PC-3 (cell line): ENCODE measurements at regions of chr9 and their contacts with region 1.

Region 1: GRCh38 chr9:134443168-134444037 is 117.1 kb downstream of the RXRA start:
- DNase-seq: peak; percentile 90
- ATAC-seq: peak; percentile 99
- H3K4me3 ChIP-seq: no peak overlapping the region
- H3K27ac ChIP-seq: no peak overlapping the region
- H3K4me1 ChIP-seq: peaks cover 5% of the 10 kb centered on the region; the same call in 1 of the 2 replicates
- H3K27me3 ChIP-seq: no peaks in the 10 kb centered on the region
- CTCF ChIP-seq: peak; percentile 87

Region 2: GRCh38 chr9:134171316-134172197 is 271.8 kb before region 1 on chr9:
- CTCF ChIA-PET with region 1: interaction called, 12 read pairs
- POLR2A ChIA-PET with region 1: no interaction called
- intact Hi-C with region 1: loop called (anchors 1 kb)
- DNase-seq: no peak
- ATAC-seq: no peak
- H3K4me3 ChIP-seq: no peak overlapping the region
- H3K27ac ChIP-seq: no peak overlapping the region
- H3K4me1 ChIP-seq: no peaks in the 10 kb centered on the region; the same call in 1 of the 2 replicates
- H3K27me3 ChIP-seq: peaks cover 5% of the 10 kb centered on the region
- CTCF ChIP-seq: no peak

Region 3: DNA sequence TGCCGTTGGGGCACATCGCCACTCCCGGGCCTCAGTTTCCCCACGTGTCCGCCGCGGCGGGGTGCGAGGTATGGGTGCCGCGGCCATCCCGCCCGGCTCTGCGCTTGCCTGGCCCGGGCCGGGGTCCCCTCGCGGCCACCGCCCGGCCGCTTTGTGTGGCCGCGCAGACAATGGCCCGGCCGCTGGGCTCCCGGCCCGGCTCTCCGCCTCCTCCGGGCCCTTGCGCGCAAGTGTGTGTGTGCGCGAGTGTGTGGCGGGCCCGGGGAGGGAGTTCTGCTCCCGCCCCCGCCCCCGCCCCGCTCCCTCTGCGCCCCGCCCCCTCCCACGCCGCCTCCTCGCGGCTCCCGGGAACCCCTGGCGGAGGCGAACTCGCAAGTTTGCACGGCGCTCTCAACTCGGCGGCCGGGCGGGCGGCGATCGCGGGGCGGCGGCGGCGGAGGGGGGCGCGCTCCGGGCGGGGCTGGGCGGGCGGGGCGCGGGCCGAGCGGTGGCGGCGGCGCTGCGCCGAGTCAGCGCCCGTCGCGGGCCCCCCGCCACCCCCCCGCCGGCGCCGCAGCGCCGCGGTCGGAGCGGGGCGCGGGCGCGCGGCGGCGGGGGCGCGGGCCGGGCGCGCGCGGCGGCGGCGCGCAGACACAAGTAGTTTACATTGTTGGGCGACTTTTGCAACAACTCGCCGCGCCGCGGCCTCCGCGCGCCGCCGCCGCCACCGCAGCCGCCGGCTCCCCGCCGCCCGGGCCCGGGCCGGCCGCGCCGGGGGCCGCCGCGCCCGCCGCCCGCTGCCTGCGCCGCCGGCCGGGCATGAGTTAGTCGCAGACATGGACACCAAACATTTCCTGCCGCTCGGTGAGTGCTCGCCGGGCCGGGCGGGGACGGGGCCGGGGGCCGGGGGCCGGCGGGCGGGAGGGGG is 117.3 kb before region 1 on chr9 and contains the start of gene RXRA:
- CTCF ChIA-PET with region 1: interaction called, 3 read pairs
- POLR2A ChIA-PET with region 1: interaction called, 10 read pairs
- intact Hi-C with region 1: no loop called
- DNase-seq: peak; percentile 65
- ATAC-seq: peak; percentile 54
- H3K4me3 ChIP-seq: peak within 1 kb of the TSS; percentile 86
- H3K27ac ChIP-seq: peak within 1 kb of the TSS; percentile 20; the same call in 1 of the 2 replicates
- H3K4me1 ChIP-seq: peaks cover 14% of the 10 kb centered on the region; the same call in 1 of the 2 replicates
- H3K27me3 ChIP-seq: no peaks in the 10 kb centered on the region
- CTCF ChIP-seq: no peak
- total RNA-seq, gene RXRA: 17.5 and 23.3 TPM in 2 replicates

Region 4: GRCh38 chr9:134378901-134379338 is 64.5 kb before region 1 on chr9:
- CTCF ChIA-PET with region 1: interaction called, 3 read pairs
- POLR2A ChIA-PET with region 1: interaction called, 3 read pairs
- intact Hi-C with region 1: loop called (anchors 2 kb)
- DNase-seq: peak; percentile 79
- ATAC-seq: peak; percentile 59
- H3K4me3 ChIP-seq: peak overlapping the region; percentile 30; the same call in 1 of the 2 replicates
- H3K27ac ChIP-seq: peak overlapping the region; percentile 85
- H3K4me1 ChIP-seq: peaks cover 41% of the 10 kb centered on the region
- H3K27me3 ChIP-seq: no peaks in the 10 kb centered on the region
- CTCF ChIP-seq: no peak